Posterior cingulate gyrus (tissue), 11 donors: ENCODE measurements at regions of chr3 and their contacts with region 1.

Region 1: GRCh38 chr3:69691860-69692259 is 47.4 kb upstream of the MITF start:
- DNase-seq: no peak

Region 2: DNA sequence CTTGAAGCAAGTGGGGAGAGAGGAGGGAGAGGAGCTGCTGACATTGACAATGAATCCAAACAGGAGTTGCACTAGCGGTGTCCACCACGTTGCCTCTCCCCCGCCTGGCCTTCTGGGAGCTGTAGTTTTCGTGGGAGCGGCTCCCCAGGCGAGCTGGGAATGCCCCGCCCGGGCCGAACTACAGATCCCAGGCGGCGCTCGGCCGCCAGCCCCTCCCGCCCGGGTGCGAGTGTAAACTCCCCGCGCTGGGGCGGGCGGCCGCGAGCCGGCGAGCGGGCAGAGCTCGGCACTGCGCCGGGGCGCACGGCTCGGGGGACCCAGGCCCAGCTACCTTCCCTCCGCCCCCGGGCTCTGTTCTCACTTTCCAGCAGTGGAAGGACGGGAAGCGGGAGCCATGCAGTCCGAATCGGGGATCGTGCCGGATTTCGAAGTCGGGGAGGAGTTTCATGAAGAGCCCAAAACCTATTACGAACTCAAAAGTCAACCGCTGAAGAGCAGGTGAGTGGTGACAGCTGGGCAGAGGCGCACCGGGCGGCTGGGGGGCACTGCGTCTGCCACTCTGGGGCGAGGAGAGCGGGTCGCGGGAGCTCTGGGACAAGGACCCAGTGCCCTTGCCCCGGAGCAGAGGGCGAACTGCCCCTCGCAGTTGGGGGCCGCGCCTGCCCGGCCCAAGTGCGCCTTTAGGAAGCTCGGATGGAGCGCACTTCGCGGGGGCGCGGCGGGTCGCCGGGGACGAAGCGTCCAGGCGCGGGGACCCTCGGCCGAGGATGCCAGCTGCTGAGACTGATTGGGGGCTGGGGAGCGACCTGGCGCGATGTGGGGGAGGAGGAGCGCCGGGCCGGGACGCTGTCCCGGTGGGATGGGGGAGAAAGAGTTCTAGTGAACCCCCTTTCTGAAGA is 47.6 kb after region 1 on chr3 and contains the start of gene MITF:
- intact Hi-C with region 1: loop called (anchors 2 kb)
- DNase-seq: peak; percentile 91 to 99 (median 96)

Region 3: GRCh38 chr3:69791919-69792399 is 100.1 kb after region 1 on chr3:
- intact Hi-C with region 1: loop called (anchors 1 kb)
- DNase-seq: no peak

Region 4: GRCh38 chr3:69855436-69856162 is 163.7 kb after region 1 on chr3:
- intact Hi-C with region 1: loop called (anchors 1 kb)
- DNase-seq: no peak

Region 5: GRCh38 chr3:69948246-69948862 is 256.5 kb after region 1 on chr3:
- intact Hi-C with region 1: loop called (anchors 2 kb)
- DNase-seq: no peak